ENCODE measurements at regions of chr7 and their contacts with region 1.

Region 1: DNA sequence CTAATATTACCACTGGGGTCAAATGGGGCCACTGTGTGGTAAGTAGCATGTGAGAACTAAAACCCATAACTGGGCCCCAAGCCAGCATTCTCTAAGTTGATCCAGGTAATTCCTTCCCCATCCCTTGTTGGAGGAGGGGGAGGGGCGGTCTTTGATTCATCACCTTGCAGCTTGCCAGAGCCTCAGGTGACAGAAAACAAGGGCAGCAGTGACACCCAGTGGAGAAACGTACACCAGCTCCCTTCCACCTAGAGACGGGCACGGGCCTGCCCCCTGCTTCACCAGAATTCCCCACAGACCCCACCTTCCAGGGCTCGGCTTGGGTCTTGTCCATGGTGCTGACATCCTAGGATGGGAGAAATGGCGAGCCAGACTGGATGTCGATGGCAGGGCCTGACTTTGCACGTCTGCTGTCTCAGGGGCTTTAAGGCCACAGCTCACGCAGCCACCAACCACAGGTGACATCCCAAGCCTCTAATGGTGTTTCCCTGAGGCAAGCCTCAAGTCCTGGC is 102.0 kb downstream of the STRA8 start:
- DNase-seq: no peak
- ATAC-seq: no peak
- H3K4me3 Mint-ChIP-seq: no peak overlapping the region
- H3K27ac Mint-ChIP-seq: no peak overlapping the region
- H3K4me1 Mint-ChIP-seq: no peaks in the 10 kb centered on the region
- H3K27me3 Mint-ChIP-seq: no peaks in the 10 kb centered on the region
- CTCF ChIP-seq: no peak

Region 2: DNA sequence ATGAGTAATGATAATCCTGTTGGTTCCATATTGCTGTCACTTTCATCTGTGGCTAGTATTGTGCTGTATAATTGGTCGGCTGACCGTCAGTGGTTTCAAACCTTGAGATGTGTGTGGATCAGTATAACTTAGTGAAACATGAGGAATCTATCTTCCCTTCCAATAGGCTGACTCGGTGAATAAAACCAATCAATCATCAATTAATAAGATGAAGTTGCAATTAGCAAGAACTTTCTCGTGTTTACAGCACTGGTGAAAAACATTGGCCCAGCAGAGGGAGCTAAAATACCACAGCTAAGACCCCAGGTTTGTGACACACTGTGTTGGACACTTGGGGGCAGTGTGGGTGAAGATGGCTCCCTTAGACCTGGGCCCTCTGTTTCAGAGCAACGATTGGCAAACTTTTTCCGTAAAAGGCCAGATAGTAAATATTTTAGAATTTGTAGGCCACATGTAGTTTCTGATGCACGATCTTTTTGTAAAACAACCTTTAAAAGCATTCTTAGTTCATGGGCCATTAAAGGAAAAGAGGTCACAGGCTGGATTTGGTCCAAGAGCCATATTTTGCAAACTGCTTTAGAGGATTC is 54.2 kb before region 1 on chr7:
- CTCF ChIA-PET with region 1: interaction called, 14 read pairs
- POLR2A ChIA-PET with region 1: no interaction called
- intact Hi-C with region 1: loop called (anchors 1 kb)
- DNase-seq: peak; percentile 24
- ATAC-seq: peak; percentile 100
- H3K4me3 Mint-ChIP-seq: no peak overlapping the region
- H3K27ac Mint-ChIP-seq: no peak overlapping the region
- H3K4me1 Mint-ChIP-seq: peaks cover 10% of the 10 kb centered on the region
- H3K27me3 Mint-ChIP-seq: peaks cover 6% of the 10 kb centered on the region
- CTCF ChIP-seq: peak; percentile 98

Measured in activated B cell treated with CpG ODN at 0.5 μM for 24 hours (primary cell).